PC-9 (cell line): ENCODE measurements at regions of chr1 and their contacts with region 1.

Region 1: GRCh38 chr1:201436393-201436792 is 14.9 kb upstream of the TNNI1 start:
- DNase-seq: no peak
- H3K4me3 ChIP-seq: no peak overlapping the region
- H3K27ac ChIP-seq: no peak overlapping the region
- H3K4me1 ChIP-seq: peaks cover 19% of the 10 kb centered on the region
- H3K27me3 ChIP-seq: no peaks in the 10 kb centered on the region
- CTCF ChIP-seq: no peak

Region 2: DNA sequence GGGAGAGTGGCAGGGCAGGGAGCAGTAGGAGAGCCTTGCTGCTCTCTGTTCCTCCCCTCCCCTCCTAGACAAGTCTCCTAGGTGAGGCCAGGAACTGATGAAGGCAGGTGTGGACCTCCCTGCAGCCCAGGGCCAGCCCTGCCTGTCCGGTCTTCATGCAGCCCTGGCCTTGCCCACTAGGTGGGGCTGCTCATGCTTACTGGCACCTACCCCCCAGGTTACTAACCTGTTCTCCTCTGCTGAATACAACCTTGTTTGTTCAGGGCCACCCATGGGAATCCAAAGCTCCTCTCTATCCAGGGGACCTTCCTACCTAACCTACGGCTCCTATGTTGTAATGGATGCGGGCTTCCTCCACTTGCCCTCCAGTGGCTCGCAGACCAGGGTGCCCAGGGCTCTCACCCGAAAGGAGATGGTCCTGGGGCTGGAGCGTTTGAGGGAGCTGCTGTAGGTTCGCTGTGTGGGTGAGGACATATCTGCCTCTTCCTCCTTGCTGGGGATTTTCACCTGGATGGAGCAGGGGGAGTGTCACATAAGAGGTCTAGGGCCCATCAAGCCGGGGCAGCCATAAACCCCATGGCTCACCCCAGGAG is 51.0 kb before region 1 on chr1:
- CTCF ChIA-PET with region 1: interaction called, 8 read pairs
- POLR2A ChIA-PET with region 1: no interaction called
- intact Hi-C with region 1: loop called (anchors 5 kb)
- DNase-seq: peak; percentile 62 to 82
- H3K4me3 ChIP-seq: no peak overlapping the region
- H3K27ac ChIP-seq: no peak overlapping the region
- H3K4me1 ChIP-seq: peaks cover 14% of the 10 kb centered on the region; the same call in 1 of the 2 replicates
- H3K27me3 ChIP-seq: no peaks in the 10 kb centered on the region
- CTCF ChIP-seq: peak; percentile 87

Region 3: DNA sequence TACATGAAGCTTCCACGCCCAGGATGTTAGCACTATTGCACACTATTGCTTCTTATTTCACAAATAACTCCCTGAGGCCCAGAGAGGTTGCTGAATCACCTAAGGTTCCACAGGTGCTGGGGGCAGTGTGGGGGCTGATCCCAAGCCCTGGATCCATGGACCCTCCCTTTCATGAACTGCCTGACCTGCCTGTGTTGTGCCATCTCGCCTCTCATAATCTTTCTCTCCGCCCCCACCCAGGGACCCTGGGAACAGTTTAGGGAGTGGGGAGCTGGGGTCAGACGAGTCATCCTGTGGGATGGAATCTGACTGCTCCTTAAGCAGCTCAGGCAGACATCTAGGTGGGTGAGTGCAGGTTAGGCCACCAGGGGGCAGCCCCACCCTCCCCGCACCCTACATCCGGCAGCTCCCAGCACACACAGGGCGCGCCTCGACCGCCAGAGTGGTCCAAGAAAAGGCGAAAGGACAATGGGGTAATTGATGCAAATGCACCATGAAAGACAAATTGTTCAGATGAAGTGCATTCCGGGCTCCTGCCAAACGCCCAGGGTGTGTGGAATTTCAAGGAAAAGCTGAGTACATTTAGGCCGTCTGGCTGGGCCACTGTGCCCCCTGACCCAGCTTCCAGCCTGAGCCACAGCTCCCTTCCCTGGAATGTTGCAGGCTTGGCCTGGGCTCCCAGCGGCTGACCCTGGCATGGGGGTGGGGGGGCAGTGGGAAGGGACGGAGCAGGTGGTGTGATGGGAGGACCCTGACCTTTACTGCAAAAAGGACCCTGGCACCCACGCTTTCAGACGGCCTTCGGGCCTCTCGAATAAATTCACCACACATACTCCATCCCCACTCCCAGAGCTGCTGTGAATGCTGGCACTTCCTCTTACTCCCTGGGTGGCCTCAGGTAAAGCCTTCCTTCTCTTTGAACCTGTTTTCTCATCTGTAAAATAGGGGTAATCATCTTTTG is 11.8 kb after region 1 on chr1:
- CTCF ChIA-PET with region 1: interaction called, 5 read pairs
- POLR2A ChIA-PET with region 1: interaction called, 22 read pairs
- intact Hi-C with region 1: no loop called
- DNase-seq: peak; percentile 65 to 72
- H3K4me3 ChIP-seq: no peak overlapping the region
- H3K27ac ChIP-seq: peak overlapping the region; percentile 38
- H3K4me1 ChIP-seq: peaks cover 22% of the 10 kb centered on the region
- H3K27me3 ChIP-seq: no peaks in the 10 kb centered on the region
- CTCF ChIP-seq: peak; percentile 92

Region 4: DNA sequence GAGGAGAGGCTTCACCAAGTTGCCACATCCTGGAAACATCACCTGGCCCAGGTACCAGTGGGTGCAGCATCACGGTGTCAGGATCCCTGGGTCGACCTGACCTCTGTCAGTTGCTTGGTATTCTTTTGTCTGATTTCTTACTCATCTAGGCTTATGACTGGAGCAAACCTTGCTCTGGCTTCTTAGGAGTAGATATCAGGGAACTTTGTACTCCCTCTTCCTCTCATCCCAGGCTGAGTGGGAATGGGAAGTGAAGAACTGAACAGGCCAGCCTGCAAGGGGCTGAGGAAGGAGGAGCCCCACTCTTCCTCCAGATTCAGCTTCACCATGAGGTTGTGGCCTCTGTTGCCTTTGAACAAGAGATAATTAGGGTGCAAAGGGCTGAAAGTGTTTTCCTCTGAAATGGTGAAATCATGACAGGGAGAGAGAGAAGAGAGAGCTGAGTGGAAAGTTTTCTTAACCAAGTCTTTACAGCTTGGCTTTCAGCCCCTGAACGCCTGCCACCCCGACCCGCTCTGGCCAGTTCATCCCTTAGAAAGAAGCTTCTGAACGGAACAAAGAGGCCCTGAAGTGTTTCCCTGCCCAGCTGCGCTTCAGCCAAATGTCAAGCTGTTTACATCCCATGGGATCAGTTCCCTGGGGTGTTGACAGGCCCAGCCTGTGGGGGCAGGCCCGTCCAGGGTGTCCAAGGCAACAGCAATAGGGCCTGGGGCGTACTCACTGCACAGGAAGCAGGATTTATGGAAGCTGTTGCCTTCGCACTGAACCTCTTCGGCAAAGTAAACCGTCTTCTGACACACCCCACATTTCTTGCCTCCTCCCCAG is 59.3 kb after region 1 on chr1:
- CTCF ChIA-PET with region 1: no interaction called
- POLR2A ChIA-PET with region 1: no interaction called
- intact Hi-C with region 1: no loop called
- DNase-seq: no peak
- H3K4me3 ChIP-seq: no peak overlapping the region
- H3K27ac ChIP-seq: no peak overlapping the region
- H3K4me1 ChIP-seq: peaks cover 2% of the 10 kb centered on the region
- H3K27me3 ChIP-seq: no peaks in the 10 kb centered on the region
- CTCF ChIP-seq: no peak

Region 5: DNA sequence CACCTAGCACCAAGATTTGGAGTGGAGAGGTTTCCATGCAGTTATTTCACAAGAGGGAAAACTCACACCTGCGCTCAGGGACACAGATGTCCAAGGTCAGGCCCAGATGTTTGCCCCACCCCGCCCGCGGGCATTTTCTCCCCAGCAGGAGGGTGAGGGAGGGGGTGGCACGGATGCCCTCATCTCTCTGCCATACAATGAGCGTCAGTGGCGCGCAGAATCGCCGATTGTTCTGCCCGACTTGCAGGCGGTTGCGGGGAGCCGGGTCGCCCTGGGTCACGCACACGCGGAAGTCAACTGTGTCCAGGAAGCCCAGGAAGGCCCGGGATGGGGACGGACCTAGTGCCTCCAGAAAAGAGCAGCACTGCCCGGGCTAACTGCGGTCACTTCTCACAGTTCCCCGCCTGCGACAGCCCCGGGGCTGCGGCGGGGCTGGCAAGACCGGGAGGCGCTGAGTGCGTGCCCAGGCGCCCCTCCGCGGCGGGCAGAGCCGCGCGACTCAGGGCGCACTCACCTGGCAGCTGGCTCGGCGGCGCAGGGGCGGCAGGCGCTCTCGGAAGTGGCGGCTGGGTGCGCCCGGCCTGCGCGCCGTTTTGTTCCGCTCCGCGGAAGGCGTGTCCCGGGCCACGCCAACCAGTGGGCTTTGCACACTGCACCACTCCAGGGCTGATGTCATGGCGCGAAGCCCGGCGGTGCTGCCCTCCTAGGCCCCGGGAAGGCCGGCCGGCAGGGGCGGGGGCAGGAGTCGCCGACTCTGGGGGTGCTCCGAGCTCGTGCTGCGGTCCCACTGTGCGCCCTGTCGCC is 70.4 kb after region 1 on chr1 and contains the start of gene CSRP1:
- CTCF ChIA-PET with region 1: interaction called, 15 read pairs
- POLR2A ChIA-PET with region 1: no interaction called
- intact Hi-C with region 1: loop called (anchors 2 kb)
- DNase-seq: peak in 1 of 2 experiments; percentile 64
- H3K4me3 ChIP-seq: peak within 1 kb of the TSS; percentile 59
- H3K27ac ChIP-seq: no peak within 1 kb of the TSS
- H3K4me1 ChIP-seq: peaks cover 29% of the 10 kb centered on the region
- H3K27me3 ChIP-seq: no peaks in the 10 kb centered on the region
- CTCF ChIP-seq: no peak
- total RNA-seq, gene CSRP1: 56.8 and 61.3 TPM in 2 replicates

Region 6: GRCh38 chr1:201602413-201603265 is 166.2 kb after region 1 on chr1:
- CTCF ChIA-PET with region 1: no interaction called
- POLR2A ChIA-PET with region 1: no interaction called
- intact Hi-C with region 1: no loop called
- DNase-seq: peak in 1 of 2 experiments; percentile 17
- H3K4me3 ChIP-seq: no peak overlapping the region
- H3K27ac ChIP-seq: no peak overlapping the region
- H3K4me1 ChIP-seq: no peaks in the 10 kb centered on the region
- H3K27me3 ChIP-seq: no peaks in the 10 kb centered on the region
- CTCF ChIP-seq: no peak

Region 7: GRCh38 chr1:202553560-202554038 is 1117.2 kb after region 1 on chr1:
- CTCF ChIA-PET with region 1: no interaction called
- POLR2A ChIA-PET with region 1: no interaction called
- intact Hi-C with region 1: no loop called
- DNase-seq: no peak
- H3K4me3 ChIP-seq: no peak overlapping the region
- H3K27ac ChIP-seq: no peak overlapping the region
- H3K4me1 ChIP-seq: 0 out of 2 replicates have a peak, but pooled peaks cover 6% of the 10 kb centered on the region
- H3K27me3 ChIP-seq: no peaks in the 10 kb centered on the region
- CTCF ChIP-seq: no peak